Cardiac septum (tissue), 1 donor: ENCODE measurements at regions of chr15 and their contacts with region 1.

Region 1: DNA sequence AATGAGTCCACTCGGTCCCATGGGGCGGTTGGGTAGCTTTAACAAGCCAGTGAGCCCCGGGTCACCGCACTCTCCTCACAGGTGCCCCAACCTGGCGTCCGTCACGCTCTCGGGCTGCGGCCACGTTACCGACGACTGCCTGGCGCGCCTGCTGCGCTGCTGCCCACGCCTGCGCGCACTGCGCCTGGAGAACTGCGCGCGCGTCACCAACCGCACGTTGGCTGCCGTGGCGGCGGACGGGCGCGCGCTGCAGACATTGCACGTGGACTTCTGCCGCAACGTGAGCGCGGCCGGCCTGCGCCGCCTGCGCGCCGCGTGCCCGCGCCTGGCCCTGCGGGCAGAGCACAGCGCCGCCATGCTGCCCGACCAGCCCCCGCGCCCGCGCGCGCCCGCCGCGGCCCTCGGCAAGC is 3.4 kb downstream of the FBXL22 start:
- DNase-seq: peak; percentile 93

Region 2: GRCh38 chr15:63288778-63289378 is 311.7 kb before region 1 on chr15:
- intact Hi-C with region 1: loop called (anchors 10 kb)
- DNase-seq: no peak

Region 3: GRCh38 chr15:63466378-63467192 is 134.0 kb before region 1 on chr15:
- intact Hi-C with region 1: loop called (anchors 2 kb)
- DNase-seq: no peak

Region 4: DNA sequence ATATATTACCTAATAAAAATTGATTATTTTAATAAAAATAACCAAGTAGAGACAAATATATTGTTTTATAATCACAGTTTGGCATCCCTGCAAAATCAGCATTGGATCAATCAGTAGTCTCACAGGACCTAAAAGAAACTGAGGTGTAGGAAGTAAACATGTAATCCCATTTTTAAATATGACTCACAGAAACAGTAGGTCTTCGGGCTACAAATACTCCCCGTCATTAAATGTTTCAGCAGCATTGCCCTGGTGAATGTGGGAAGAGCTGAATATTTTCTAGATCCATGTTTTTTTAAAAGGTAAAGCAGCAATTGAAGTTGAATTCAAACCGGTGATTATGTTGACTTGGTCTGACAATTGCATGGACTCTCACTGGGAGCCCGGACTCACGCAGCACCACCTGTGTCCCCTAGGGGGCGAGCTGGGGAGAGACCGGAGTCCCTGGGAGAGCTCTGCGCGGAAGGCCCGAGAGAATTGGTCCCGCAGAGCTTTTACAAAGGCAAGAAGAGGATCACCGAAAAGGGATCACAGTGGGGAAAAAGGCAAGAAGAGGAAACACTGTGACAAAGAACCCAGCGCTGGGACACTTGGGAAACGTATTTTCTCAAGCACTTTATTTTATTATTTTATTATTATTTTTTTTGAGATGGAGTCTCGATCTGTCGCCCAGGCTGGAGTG is 113.4 kb before region 1 on chr15:
- intact Hi-C with region 1: loop called (anchors 5 kb)
- DNase-seq: peak; percentile 95

Region 5: DNA sequence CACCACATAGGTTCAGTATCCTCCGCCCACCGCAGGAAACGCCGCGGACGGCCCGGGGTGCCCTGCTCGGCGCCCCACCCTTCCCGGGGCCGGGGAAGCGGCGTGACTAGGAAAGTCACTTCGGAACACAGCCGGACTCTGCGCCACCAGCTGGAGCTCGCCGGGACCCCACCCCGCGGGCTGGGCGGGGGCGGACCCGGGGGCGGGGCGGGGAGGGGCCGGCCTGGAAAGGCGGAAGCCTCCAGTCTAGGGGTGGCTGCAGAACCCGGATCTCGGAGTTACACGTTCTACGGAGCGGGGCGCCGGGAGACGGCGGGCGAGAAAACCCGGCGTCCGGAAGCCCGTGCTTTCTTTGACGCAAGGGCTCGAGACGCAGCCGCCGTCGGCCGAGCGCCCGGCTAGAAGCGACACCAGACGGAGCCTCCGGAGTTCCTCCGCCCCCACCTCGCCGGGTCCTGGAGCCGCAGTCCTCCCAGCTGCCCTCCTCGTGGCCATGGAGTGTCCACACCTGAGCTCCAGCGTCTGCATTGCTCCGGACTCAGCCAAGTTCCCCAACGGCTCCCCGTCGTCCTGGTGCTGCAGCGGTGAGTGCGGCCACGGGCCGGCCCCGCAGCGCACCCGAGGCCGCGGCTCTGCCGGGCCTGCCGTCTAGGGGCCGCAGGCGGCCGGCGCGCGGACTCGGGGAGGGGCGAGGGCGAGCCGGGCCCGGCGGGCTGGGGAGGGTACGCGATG is 96.2 kb before region 1 on chr15 and contains the start of gene USP3:
- intact Hi-C with region 1: loop called (anchors 2 kb)
- DNase-seq: peak; percentile 98
- total RNA-seq, gene USP3: 16.2 TPM

Region 6: DNA sequence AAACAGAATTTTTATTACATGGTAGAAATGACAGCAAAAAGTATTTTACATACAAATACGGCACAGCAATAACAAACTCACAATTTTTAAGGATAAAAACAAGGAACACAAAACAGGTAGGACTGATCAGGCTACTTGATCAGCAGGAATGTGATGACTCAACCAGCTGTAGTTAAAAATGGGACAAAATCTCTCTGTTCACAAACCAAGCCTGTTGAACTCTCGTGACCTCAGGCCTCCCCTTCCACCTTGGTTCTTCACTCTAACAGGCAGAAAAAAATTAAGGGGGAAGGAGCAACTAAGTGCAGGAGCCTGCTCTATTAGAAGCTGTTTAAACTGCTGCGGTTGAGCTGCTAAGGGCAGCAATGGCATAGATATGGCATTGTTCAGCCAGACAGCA is 15.3 kb after region 1 on chr15:
- intact Hi-C with region 1: no loop called
- DNase-seq: no peak

Region 7: GRCh38 chr15:63655683-63656372 is 55.2 kb after region 1 on chr15:
- intact Hi-C with region 1: no loop called
- DNase-seq: no peak